ENCODE measurements at regions of chr5 and their contacts with region 1.

Region 1: DNA sequence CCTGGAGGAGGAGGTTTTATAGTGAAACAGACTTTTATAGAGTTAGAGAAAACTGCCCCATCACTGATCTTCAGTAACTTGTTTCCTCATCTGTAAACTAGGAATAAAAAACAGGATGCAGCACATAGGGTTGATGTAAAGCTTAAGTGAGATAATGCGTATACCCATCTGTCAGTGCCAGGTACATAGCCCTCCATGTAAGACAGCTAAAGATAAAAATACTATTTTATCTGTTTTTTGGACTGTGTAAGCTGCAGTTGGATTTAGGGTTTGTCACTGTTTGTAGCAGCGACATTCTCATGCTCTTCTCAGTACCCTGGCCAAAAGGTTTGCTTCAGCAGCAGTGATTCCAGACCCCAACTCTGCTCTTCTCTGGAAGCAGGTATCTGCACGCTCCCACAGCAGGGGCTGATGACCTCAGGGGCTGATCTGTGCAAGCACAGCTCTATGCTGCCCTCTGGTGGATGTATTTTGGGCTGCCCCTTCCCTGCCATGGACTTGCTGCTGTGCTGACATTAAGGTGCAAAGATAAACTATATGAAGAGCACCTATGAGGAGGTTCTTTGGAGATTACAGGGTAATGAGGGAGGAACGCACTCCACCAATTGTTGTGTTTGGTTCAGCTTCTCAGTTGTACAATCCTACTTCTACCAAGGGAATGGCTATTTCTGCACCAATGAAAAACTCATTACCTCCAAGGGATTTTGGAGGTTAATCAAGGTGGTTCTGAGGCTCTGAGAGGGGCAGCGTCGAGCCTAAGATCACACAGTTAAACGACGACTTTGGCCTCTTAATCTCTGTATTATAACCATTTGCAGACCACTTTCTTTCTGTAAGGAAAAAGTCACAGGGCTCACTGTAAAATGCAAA is 13.1 kb downstream of the HMHB1 start:
- DNase-seq: peak; percentile 70
- ATAC-seq: peak; percentile 99
- H3K4me3 Mint-ChIP-seq: no peak overlapping the region
- H3K27ac Mint-ChIP-seq: no peak overlapping the region
- H3K4me1 Mint-ChIP-seq: peaks cover 5% of the 10 kb centered on the region
- H3K27me3 Mint-ChIP-seq: no peaks in the 10 kb centered on the region
- CTCF ChIP-seq: peak; percentile 90

Region 2: DNA sequence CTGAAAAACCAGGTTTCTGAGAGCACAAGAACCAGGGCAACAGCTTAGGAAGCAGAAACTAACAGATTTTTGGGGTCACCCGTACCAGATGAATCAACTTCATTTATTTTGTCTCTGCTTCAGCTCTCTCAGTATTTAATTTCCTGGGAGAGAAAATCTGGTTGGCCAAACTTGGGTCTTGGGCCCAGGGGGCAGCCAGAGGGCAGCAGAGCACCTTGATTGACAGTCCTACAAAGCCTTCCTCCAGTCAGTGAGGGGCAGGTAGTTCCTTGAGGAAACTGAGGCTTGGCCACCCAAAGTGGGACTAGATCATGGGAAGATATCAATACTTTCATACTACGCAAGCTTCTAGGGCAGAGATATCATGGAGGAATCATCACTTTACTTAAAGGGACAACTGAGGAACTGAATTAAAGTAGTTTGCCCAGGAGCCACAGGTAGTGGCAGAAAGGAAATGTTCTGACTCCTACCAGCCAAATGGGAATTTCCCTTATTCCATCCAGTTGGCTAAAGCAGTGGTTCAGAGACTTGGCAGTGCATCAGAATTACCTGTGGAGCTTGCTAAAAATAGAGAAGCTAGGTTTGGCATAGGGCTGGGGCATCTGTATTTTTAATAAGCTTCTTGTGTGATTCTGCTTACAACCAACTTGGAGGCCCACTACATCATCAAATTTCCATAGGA is 1076.4 kb before region 1 on chr5:
- CTCF ChIA-PET with region 1: interaction called, 7 read pairs
- POLR2A ChIA-PET with region 1: no interaction called
- intact Hi-C with region 1: loop called (anchors 2 kb)
- DNase-seq: peak; percentile 46
- ATAC-seq: peak; percentile 49
- H3K4me3 Mint-ChIP-seq: no peak overlapping the region
- H3K27ac Mint-ChIP-seq: peak overlapping the region; percentile 15
- H3K4me1 Mint-ChIP-seq: no peaks in the 10 kb centered on the region
- H3K27me3 Mint-ChIP-seq: peaks cover 9% of the 10 kb centered on the region
- CTCF ChIP-seq: peak; percentile 74

Region 3: GRCh38 chr5:143002459-143003328 is 822.4 kb before region 1 on chr5:
- CTCF ChIA-PET with region 1: interaction called, 68 read pairs
- POLR2A ChIA-PET with region 1: interaction called, 14 read pairs
- intact Hi-C with region 1: loop called (anchors 1 kb)
- DNase-seq: no peak
- ATAC-seq: peak; percentile 80
- H3K4me3 Mint-ChIP-seq: peak overlapping the region; percentile 13
- H3K27ac Mint-ChIP-seq: peak overlapping the region; percentile 94
- H3K4me1 Mint-ChIP-seq: peaks cover 85% of the 10 kb centered on the region
- H3K27me3 Mint-ChIP-seq: no peaks in the 10 kb centered on the region
- CTCF ChIP-seq: no peak

Region 4: DNA sequence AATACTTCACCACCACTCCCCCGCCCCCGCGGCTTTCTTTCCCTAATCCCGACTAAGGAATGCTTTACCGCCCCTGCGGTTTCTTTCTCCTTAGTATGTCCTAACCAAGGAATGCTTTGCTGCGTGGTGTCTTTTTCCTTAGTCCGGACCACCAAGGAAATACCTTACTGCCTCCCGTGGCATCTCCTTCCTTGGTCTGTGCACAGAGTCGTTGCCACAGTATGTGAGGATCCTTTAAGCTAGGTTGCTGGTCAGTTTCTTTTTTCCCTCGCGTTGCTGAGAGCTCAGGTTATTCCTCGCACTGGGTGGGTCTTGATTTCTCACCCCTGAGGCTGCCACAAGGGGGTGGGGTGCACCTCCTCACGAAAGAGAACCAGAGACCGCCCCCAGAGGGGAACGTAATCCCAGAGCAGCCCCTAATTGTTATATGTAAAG is 731.0 kb before region 1 on chr5:
- CTCF ChIA-PET with region 1: no interaction called
- POLR2A ChIA-PET with region 1: no interaction called
- intact Hi-C with region 1: loop called (anchors 10 kb)
- DNase-seq: no peak
- ATAC-seq: no peak
- H3K4me3 Mint-ChIP-seq: peak overlapping the region; percentile 35
- H3K27ac Mint-ChIP-seq: no peak overlapping the region
- H3K4me1 Mint-ChIP-seq: peaks cover 3% of the 10 kb centered on the region
- H3K27me3 Mint-ChIP-seq: no peaks in the 10 kb centered on the region
- CTCF ChIP-seq: no peak

Region 5: DNA sequence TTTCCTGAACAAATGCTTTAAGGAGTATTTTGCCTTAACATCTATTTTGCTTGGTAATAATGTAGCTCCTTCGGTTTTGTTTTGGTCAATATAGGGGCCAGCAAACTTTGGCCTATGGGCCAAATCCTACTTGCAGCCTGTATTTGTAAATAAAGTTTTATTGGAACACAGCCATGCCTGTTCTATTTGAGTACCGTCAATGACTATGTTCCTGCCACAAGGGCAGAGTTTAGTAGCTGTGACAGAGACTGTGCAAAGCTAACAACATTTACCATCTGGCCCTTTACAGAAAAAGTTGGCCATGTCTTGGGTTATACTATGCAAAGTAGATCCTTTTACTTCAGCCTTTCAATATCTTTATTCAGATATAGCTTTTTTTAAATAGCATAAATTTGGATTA is 535.0 kb before region 1 on chr5:
- CTCF ChIA-PET with region 1: no interaction called
- POLR2A ChIA-PET with region 1: no interaction called
- intact Hi-C with region 1: loop called (anchors 5 kb)
- DNase-seq: no peak
- ATAC-seq: no peak
- H3K4me3 Mint-ChIP-seq: no peak overlapping the region
- H3K27ac Mint-ChIP-seq: no peak overlapping the region
- H3K4me1 Mint-ChIP-seq: peaks cover 18% of the 10 kb centered on the region
- H3K27me3 Mint-ChIP-seq: no peaks in the 10 kb centered on the region
- CTCF ChIP-seq: no peak

Region 6: DNA sequence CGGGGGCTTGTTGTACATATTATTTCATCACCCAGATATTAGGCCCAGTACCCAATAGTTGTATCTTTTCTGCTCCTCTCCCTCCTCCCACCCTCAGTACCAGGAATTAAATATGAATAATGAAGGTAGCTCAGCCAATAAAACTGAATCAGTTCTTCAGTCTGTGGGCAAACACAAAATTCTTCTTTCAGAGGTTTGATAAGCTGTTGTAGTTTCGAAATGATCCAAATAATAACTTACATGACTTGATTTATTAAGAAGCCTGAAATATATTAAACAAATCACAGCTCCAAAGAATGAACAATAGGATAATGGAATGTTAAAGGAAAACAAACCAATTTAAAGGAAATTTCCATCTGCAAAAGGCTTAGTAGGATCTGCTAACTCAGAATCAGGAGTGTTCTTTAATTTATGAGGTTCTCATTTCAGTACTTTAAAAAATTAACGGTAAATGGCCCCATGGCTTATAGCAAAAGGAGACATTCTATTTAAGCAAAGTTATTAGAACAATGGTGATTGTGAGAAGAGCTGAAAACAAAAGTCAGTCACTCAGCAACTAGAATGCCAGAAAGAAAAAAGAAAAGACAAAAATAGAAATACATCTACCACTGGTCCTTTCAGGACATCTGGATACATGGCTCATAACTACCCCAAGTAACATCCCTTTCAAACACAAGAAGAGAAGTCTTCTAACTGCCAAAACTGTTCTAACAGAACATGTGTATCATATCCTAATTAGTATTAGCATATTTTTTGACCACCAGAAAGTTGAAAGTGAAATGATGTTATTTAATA is 484.0 kb before region 1 on chr5:
- CTCF ChIA-PET with region 1: no interaction called
- POLR2A ChIA-PET with region 1: interaction called, 11 read pairs
- intact Hi-C with region 1: no loop called
- DNase-seq: no peak
- ATAC-seq: no peak
- H3K4me3 Mint-ChIP-seq: no peak overlapping the region
- H3K27ac Mint-ChIP-seq: peak overlapping the region; percentile 59
- H3K4me1 Mint-ChIP-seq: peaks cover 44% of the 10 kb centered on the region
- H3K27me3 Mint-ChIP-seq: no peaks in the 10 kb centered on the region
- CTCF ChIP-seq: no peak

Region 7: DNA sequence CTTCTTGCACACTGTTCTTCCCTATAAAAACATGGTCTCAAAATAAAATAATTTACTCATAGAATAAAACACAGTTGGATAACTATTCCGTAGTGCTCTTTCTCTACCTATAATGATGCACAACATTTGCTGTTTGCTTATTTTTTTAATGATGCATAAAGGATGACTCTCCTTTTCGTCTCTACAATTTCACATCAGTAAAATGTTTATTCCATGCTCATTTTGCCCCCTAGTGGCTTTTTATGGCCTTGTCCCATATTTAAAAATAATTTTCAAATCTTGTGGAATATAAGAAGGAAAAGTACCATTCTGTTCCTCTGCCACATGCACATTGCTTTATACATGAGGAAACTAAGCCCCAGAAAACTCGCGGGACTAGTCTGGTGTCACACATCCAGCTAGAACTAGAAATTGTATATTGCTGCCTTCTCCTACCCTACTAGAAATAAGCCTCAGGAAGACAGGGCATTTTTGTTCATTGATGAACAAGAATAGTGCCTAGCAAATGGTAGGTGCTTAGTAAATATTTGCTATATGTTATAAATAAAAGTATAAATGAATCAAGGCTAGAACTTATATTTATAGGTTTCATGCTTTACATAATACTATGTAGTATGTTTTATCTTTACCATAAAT is 358.3 kb after region 1 on chr5:
- CTCF ChIA-PET with region 1: interaction called, 3 read pairs
- POLR2A ChIA-PET with region 1: no interaction called
- intact Hi-C with region 1: loop called (anchors 2 kb)
- DNase-seq: no peak
- ATAC-seq: no peak
- H3K4me3 Mint-ChIP-seq: no peak overlapping the region
- H3K27ac Mint-ChIP-seq: no peak overlapping the region
- H3K4me1 Mint-ChIP-seq: peaks cover 20% of the 10 kb centered on the region
- H3K27me3 Mint-ChIP-seq: no peaks in the 10 kb centered on the region
- CTCF ChIP-seq: peak; percentile 74